ENCODE measurements at regions of chr2 and their contacts with region 1.

Region 1: DNA sequence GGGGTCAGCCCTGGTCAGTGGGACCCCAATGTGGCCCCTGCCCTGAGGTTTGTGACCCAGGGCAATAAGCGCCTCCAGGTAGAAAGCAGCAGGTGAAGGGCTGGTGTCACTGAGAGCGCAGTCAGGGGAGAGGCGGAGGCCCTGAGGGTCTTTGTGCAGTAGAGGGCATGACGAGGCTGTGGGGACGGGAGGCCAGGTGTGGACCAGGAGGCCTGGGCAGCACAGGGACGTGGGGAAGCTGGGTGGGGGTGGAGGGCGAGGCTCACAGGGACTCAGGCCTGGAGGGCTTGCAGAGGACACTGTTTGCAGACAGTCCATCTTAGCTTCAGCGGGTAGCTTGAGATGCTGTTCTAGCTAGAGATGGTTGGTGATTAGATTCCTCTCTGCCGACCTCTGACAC is 32.0 kb downstream of the TRAF3IP1 start:
- DNase-seq: no peak
- ATAC-seq: no peak
- H3K4me3 ChIP-seq: no peak overlapping the region
- H3K27ac ChIP-seq: no peak overlapping the region
- H3K4me1 ChIP-seq: peaks cover 5% of the 10 kb centered on the region in 2 experiments; a peak in 3 of 4 replicates
- H3K27me3 ChIP-seq: no peaks in the 10 kb centered on the region
- CTCF ChIP-seq: no peak
- POLR2A ChIP-seq: no peak
- RAD21 ChIP-seq: no peak

Region 2: DNA sequence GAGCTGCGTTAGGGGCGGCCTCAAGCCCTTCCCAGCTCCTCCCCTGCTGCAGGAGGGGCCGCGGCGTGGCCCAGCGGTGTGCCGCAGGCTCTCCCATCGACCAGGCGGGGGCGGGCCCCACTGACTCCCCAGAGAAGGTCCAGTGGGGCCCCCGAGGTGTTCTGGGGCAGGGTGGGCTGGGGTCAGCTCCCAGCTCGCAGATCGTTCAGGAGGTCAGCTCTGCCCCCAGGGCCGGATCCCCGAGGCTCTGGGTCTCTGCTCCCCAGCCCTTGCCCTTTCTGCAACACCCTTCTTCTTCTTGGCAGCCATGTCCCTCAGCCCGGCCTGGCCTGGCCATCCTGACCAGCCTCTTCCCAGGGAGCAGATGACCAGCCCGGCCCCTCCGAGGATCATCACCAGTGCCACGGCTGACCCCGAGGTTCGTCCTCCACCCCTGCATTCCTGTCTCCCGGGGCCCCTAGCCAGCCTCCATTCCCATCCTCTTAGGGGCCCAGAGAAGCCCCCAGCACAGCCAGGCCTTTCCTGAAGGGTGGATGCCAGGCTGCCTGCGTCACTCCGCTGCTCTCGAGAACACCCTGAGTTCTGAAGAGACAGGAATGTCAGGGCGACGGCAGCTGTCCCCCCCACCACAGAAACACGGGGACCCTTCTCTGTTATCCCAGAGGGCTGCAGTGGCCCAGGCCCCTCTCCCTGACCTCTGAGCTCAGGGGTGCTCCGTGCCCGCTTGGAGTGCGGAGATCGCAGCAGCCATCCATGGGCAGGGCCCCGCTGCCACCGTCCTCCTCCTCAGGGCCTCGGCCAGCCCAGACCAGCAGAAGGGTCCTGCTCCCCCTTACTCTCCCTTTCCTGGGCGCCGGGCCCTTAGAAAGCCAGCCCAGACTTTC is 224.8 kb before region 1 on chr2:
- CTCF ChIA-PET with region 1: no interaction called
- POLR2A ChIA-PET with region 1: no interaction called
- RAD21 ChIA-PET with region 1: no interaction called
- intact Hi-C with region 1: no loop called
- DNase-seq: no peak
- ATAC-seq: no peak; the same call in 1 of the 2 replicates
- H3K4me3 ChIP-seq: no peak overlapping the region
- H3K27ac ChIP-seq: no peak overlapping the region
- H3K4me1 ChIP-seq: no peaks in the 10 kb centered on the region
- H3K27me3 ChIP-seq: no peaks in the 10 kb centered on the region
- CTCF ChIP-seq: no peak
- POLR2A ChIP-seq: no peak
- RAD21 ChIP-seq: no peak

Region 3: DNA sequence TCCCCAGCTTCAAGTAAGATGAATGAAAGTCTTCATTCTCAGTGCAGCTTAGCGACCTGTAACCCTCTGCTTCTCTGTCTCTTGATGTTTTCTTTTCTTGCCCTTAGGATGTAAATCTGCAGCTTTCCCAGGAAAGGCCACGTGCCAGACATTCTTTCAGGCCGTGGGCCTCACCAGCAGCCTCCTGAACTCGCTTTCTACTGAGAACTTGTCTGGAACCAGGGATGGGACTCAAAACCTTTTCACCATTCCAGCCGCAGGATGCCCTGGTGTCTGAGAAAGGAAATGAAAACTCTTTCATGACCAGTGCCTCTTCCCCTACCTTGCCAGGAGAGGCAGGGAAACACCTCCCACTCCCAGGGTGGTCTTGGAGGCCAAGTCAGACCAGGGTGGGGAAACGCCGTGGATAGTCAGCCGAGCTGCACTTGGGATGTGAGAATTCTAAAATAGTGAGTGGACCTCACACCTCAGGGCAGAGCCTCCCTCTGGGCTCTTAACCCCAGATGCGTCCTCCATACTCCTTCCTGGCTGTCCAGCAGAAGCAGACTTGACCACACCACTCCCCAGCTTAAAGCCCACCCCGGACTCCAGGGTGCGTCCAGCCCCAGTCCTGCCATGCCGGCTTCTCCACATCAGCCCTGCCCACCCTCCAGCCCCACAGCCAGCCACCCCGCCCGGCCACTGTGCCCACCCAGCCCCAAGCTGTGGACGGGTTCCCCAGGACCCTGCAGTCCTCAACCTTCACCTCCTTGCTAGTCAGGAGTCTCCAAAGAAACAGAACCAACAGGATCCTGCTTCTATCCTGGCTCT is 611.0 kb after region 1 on chr2:
- CTCF ChIA-PET with region 1: no interaction called
- POLR2A ChIA-PET with region 1: no interaction called
- RAD21 ChIA-PET with region 1: no interaction called
- intact Hi-C with region 1: loop called (anchors 10 kb)
- DNase-seq: no peak
- ATAC-seq: no peak
- H3K4me3 ChIP-seq: no peak overlapping the region
- H3K27ac ChIP-seq: no peak overlapping the region
- H3K4me1 ChIP-seq: no peaks in the 10 kb centered on the region
- H3K27me3 ChIP-seq: no peaks in the 10 kb centered on the region
- CTCF ChIP-seq: no peak
- POLR2A ChIP-seq: no peak
- RAD21 ChIP-seq: no peak